Dorsolateral prefrontal cortex (tissue), 120 donors: ENCODE measurements at regions of chr4 and their contacts with region 1.

Region 1: DNA sequence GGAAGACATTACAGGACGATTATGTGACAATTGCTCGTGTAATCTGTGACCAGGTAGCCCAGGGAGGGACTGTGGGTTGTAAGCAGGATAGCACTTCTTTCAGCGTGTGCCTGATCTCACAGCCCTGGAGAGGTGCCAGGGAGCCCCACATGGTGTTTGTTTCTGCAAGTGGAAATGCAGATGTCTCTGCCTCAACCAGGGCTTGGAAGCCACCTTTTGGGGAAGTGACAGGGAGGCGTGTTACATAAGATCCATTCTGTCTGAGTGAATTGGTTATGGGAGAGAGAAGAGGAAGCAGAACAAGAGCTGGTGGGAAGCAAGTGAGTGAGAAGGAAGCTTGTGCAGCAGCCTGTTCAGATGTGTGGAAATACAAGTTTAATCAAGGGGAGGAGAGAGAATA is 104.5 kb upstream of the GATB start:
- DNase-seq: peak; percentile 50 to 86 (median 76)
- H3K4me3 ChIP-seq: no peak overlapping the region
- H3K27ac ChIP-seq: peak overlapping the region in 53 of 59 donors; percentile 20 to 92 (median 72)
- H3K27me3 ChIP-seq: peaks cover 0 to 12% (median 0%) of the 10 kb centered on the region in 45 donors
- CTCF ChIP-seq: no peak

Region 2: DNA sequence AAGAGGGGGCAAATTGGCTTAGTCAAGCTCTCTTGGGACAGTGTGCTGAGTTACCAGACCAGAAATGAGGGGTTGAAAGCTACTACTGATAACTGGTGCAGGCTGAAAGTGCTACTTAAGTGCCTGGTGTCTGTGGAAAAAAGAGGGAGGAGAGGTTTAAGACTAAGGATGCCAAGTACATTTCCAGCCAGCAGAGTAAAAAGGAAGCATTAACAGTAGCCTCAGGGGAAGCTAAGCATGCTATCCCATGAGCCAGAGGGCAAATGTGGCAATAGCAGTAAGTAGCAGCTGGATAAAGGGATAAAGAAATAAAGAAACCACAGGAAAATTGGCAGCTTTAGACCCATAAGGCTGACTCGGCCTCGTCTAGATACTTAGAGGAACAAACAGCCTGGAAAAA is 1479.7 kb before region 1 on chr4:
- intact Hi-C with region 1: no loop called
- DNase-seq: no peak
- H3K4me3 ChIP-seq: no peak overlapping the region
- H3K27ac ChIP-seq: no peak overlapping the region
- H3K27me3 ChIP-seq: no peaks in the 10 kb centered on the region
- CTCF ChIP-seq: no peak

Region 3: GRCh38 chr4:150950657-150951288 is 914.5 kb before region 1 on chr4:
- intact Hi-C with region 1: no loop called
- DNase-seq: no peak
- H3K4me3 ChIP-seq: no peak overlapping the region
- H3K27ac ChIP-seq: no peak overlapping the region
- H3K27me3 ChIP-seq: no peaks in the 10 kb centered on the region
- CTCF ChIP-seq: no peak

Region 4: GRCh38 chr4:151624626-151625565 is 240.4 kb before region 1 on chr4:
- intact Hi-C with region 1: loop called in 1 of 2 experiments (anchors 5 kb)
- DNase-seq: peak in 1 of 10 donors; percentile 86
- H3K4me3 ChIP-seq: peak overlapping the region in 2 of 59 donors; percentile 3 to 24
- H3K27ac ChIP-seq: peak overlapping the region in 56 of 59 donors; percentile 4 to 88 (median 70)
- H3K27me3 ChIP-seq: no peaks in the 10 kb centered on the region
- CTCF ChIP-seq: no peak

Region 5: GRCh38 chr4:151729731-151730559 is 135.4 kb before region 1 on chr4:
- intact Hi-C with region 1: no loop called
- DNase-seq: no peak
- H3K4me3 ChIP-seq: no peak overlapping the region
- H3K27ac ChIP-seq: no peak overlapping the region
- H3K27me3 ChIP-seq: no peaks in the 10 kb centered on the region
- CTCF ChIP-seq: no peak

Region 6: GRCh38 chr4:151760712-151761527 is 104.4 kb before region 1 on chr4 and contains the start of gene GATB:
- intact Hi-C with region 1: loop called in 1 of 2 experiments (anchors 10 kb)
- DNase-seq: peak; percentile 91 to 99 (median 96)
- H3K4me3 ChIP-seq: peak within 1 kb of the TSS; percentile 61 to 98 (median 85)
- H3K27ac ChIP-seq: peak within 1 kb of the TSS in 57 of 59 donors; percentile 7 to 93 (median 81)
- H3K27me3 ChIP-seq: peaks cover 0 to 4% (median 0%) of the 10 kb centered on the region in 45 donors
- CTCF ChIP-seq: peak in 55 of 56 donors; percentile 32 to 82 (median 69)
- total RNA-seq, gene GATB: 36.7 to 100 (median 63.1) TPM

Region 7: GRCh38 chr4:151960449-151961230 is 95.3 kb after region 1 on chr4:
- intact Hi-C with region 1: loop called in 1 of 2 experiments (anchors 2 kb)
- DNase-seq: peak; percentile 23 to 81 (median 62)
- H3K4me3 ChIP-seq: peak overlapping the region in 1 of 59 donors; percentile 4
- H3K27ac ChIP-seq: peak overlapping the region in 58 of 59 donors; percentile 24 to 93 (median 78)
- H3K27me3 ChIP-seq: no peaks in the 10 kb centered on the region
- CTCF ChIP-seq: no peak

Region 8: DNA sequence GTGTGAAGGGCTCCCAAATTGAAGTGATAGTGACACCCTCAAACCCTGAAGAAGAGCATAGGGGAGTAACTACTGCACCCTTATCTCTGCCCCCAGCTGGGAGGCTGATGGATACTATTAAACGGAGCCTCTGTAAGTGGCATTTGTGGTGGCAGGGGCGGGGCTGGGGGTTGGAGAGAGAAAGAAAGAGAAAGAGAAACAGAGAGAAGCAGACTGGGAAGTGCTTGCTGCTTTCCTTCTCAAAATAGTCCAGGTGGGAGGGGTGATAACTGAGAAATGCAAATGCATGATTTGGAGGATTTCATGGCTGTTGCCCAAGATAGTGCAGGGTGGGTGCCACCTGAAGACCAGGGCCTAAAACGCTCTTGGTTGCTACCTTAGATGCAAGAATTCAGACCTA is 149.0 kb after region 1 on chr4:
- intact Hi-C with region 1: loop called in 1 of 2 experiments (anchors 10 kb)
- DNase-seq: no peak
- H3K4me3 ChIP-seq: no peak overlapping the region
- H3K27ac ChIP-seq: peak overlapping the region in 56 of 59 donors; percentile 1 to 91 (median 72)
- H3K27me3 ChIP-seq: peaks cover 0 to 4% (median 0%) of the 10 kb centered on the region in 45 donors
- CTCF ChIP-seq: no peak

Region 9: DNA sequence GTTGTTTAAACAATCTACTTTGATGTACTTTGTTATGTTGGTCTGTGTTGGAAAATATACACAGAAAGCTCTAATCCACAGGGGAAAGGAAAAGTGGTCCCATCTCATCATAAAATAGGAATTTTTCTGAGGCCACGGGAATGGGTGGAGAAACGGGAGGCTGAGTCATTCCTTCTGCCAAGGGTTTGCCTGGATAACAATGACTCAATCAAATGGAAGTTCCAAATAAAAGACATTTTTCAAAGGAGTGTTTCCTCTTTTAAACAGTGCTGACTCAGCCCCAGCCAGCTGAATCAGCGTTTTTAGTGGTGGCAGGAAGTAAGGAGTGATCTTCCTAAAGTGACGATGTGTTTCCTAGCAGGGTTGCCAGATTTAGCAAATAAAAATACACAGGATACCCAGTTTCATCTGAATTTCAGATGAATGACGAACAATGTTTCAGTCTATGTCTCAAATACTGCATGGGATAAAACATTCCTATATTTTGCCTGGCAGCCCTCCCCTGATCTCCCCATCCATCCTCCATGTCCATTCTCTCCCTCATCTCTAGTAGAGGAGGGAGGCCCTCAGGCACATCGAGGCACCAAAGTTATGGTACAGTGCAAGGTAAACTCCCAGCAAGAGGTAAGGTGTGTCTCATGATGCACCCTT is 240.9 kb after region 1 on chr4:
- intact Hi-C with region 1: loop called in 1 of 2 experiments (anchors 10 kb)
- DNase-seq: peak in 4 of 10 donors; percentile 58 to 74 (median 63)
- H3K4me3 ChIP-seq: no peak overlapping the region
- H3K27ac ChIP-seq: peak overlapping the region in 38 of 59 donors; percentile 4 to 93 (median 66)
- H3K27me3 ChIP-seq: no peaks in the 10 kb centered on the region
- CTCF ChIP-seq: no peak